OCI-LY7 (cell line): ENCODE measurements at regions of chr1 and their contacts with region 1.

Region 1: GRCh38 chr1:1059494-1060280 is 14.4 kb downstream of the RNF223 start:
- DNase-seq: peak; percentile 92
- H3K4me3 ChIP-seq: peak overlapping the region; percentile 68
- H3K27ac ChIP-seq: no peak overlapping the region
- H3K4me1 ChIP-seq: peaks cover 12% of the 10 kb centered on the region
- CTCF ChIP-seq: peak; percentile 37; the same call in 1 of the 2 replicates

Region 2: GRCh38 chr1:941588-942383 is 117.9 kb before region 1 on chr1:
- CTCF ChIA-PET with region 1: no interaction called
- POLR2A ChIA-PET with region 1: no interaction called
- intact Hi-C with region 1: no loop called
- DNase-seq: no peak
- H3K4me3 ChIP-seq: no peak overlapping the region
- H3K27ac ChIP-seq: no peak overlapping the region
- H3K4me1 ChIP-seq: peaks cover 5% of the 10 kb centered on the region
- CTCF ChIP-seq: no peak

Region 3: GRCh38 chr1:983799-984473 is 75.8 kb before region 1 on chr1:
- CTCF ChIA-PET with region 1: no interaction called
- POLR2A ChIA-PET with region 1: no interaction called
- intact Hi-C with region 1: loop called (anchors 1 kb)
- DNase-seq: peak; percentile 52
- H3K4me3 ChIP-seq: no peak overlapping the region
- H3K27ac ChIP-seq: no peak overlapping the region
- H3K4me1 ChIP-seq: no peaks in the 10 kb centered on the region
- CTCF ChIP-seq: peak; percentile 83

Region 4: GRCh38 chr1:1019122-1019999 is 40.3 kb before region 1 on chr1:
- CTCF ChIA-PET with region 1: no interaction called
- POLR2A ChIA-PET with region 1: no interaction called
- intact Hi-C with region 1: loop called (anchors 5 kb)
- DNase-seq: peak; percentile 87
- H3K4me3 ChIP-seq: peak overlapping the region; percentile 65
- H3K27ac ChIP-seq: no peak overlapping the region
- H3K4me1 ChIP-seq: peaks cover 17% of the 10 kb centered on the region
- CTCF ChIP-seq: peak; percentile 45